GM12878 (cell line): ENCODE measurements at regions of chr17 and their contacts with region 1.

Region 1: DNA sequence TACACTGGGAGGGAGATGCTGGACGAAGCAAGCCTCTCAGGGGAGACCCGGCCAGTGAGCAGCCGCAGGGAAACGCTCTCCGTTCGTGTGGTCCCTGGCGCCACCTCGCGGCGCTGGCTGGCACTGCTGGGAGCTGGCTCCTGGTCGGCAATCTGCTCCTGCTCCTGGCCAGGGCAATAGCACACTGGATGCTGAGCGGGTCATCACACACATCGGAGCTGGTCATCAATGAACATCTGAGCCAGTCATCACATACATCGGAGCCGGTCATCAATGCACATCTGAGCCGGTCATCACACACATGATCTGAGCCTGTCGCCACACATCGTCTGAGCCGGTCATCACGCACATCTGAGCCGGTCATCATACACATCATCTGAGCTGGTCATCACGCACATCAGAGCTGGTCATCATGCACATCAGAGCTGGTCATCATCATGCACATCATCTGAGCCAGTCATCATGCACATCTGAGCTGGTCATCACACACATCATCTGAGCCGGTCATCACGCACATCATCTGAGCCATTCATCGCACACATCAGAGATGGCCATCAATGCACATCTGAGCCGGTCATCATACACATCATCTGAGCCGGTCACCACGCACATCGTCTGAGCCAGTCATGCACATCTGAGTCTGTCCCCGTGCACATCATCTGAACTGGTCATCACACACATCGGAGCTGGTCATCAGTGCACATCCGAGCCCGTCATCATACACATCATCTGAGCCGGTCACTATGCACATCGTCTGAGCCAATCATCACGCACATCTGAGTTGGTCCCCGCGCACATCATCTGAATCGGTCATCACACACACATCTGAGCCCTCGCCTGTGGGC is 217.3 kb downstream of the RBFOX3 start:
- DNase-seq: no peak
- ATAC-seq: peak; percentile 86
- H3K4me3 ChIP-seq: no peak overlapping the region
- H3K27ac ChIP-seq: no peak overlapping the region
- H3K4me1 ChIP-seq: no peaks in the 10 kb centered on the region
- H3K27me3 ChIP-seq: peaks cover 0 to 3% of the 10 kb centered on the region in 2 experiments; a peak in 3 of 4 replicates
- CTCF ChIP-seq: peak; percentile 92 to 98 (median 97)
- EP300 ChIP-seq: no peak
- POLR2A ChIP-seq: no peak
- RAD21 ChIP-seq: peak; percentile 87

Region 2: DNA sequence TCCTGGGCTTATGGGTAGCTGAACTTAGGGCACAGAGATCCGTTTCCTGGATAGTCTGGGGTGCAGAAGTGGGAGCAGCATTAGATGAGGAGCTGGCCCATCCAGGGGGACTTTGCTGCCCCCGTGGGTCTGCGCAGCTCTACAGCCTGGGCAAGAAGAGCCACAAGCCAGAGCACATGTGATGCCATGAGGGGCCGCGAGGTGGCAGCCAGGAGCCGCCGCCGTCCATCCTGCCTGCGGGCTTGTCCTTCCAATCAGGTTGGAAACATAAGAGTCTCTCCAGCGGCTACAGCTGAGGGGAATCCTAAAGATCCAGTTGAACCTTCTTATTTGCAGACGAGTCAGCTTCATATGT is 347.8 kb before region 1 on chr17:
- CTCF ChIA-PET with region 1: interaction called, 27 read pairs
- POLR2A ChIA-PET with region 1: no interaction called
- RAD21 ChIA-PET with region 1: interaction called, 7 read pairs
- SMC1A ChIA-PET with region 1: interaction called, 5 read pairs
- in situ Hi-C with region 1: no loop called
- intact Hi-C with region 1: no loop called
- DNase-seq: no peak
- ATAC-seq: peak; percentile 94
- H3K4me3 ChIP-seq: no peak overlapping the region
- H3K27ac ChIP-seq: no peak overlapping the region
- H3K4me1 ChIP-seq: no peaks in the 10 kb centered on the region
- H3K27me3 ChIP-seq: no peaks in the 10 kb centered on the region; a peak in 1 of 4 replicates
- CTCF ChIP-seq: peak; percentile 90 to 97 (median 92)
- EP300 ChIP-seq: no peak
- POLR2A ChIP-seq: no peak
- RAD21 ChIP-seq: peak; percentile 67

Region 3: GRCh38 chr17:79065105-79065670 is 328.4 kb before region 1 on chr17:
- CTCF ChIA-PET with region 1: interaction called, 11 read pairs
- POLR2A ChIA-PET with region 1: no interaction called
- RAD21 ChIA-PET with region 1: no interaction called
- SMC1A ChIA-PET with region 1: interaction called, 3 read pairs
- in situ Hi-C with region 1: no loop called
- intact Hi-C with region 1: no loop called
- DNase-seq: no peak
- ATAC-seq: peak; percentile 51; the same call in 1 of the 3 replicates
- H3K4me3 ChIP-seq: no peak overlapping the region
- H3K27ac ChIP-seq: no peak overlapping the region
- H3K4me1 ChIP-seq: no peaks in the 10 kb centered on the region
- H3K27me3 ChIP-seq: no peaks in the 10 kb centered on the region
- CTCF ChIP-seq: peak; percentile 46 to 51 (median 47); a peak in 5 of 6 replicates
- EP300 ChIP-seq: no peak
- POLR2A ChIP-seq: no peak
- RAD21 ChIP-seq: peak; percentile 38; the same call in 1 of the 2 replicates

Region 4: DNA sequence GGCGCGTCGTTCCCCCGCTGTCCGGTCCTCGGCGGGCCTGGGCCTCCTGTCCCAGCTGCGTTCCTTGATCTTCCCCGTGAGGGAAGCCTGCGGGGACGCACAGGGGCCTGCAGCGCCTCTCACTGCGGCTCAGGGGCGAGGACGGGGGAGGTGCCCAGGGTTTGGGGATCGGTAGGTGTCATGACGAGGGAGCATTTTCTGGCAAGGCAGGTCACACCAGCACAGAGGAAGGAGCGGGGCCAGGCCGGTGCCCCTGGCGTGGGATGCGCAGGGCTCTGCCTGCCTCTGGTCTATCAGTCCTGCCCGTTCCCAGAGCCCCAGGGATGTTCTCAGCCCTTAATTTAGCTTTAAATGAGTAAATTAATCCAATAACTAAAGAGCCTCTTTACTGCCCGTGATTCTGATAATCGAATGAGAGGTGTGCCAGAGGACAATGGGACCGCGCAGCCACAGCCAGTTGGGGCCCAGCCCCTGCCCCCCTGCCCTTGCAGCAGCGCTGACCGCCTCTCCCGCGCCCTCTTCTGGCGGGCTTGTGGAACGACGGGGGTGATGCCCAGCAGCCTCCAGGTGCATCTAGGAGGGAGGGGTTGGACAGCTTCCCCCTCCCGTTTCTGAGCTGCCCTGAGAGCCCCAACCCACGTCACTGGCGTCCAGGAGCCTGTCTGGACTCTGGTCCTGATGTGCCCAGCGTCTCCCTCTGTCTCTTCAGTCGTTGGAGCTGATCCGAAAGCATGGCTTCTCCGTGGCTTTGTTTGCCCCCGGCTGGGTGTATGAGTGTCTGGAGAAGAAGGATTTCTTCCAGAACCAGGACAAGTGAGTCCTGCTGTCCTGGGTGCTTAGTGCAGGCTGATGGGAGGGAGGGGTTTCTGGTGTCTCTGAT is 311.0 kb before region 1 on chr17:
- CTCF ChIA-PET with region 1: interaction called, 59 read pairs
- POLR2A ChIA-PET with region 1: no interaction called
- RAD21 ChIA-PET with region 1: interaction called, 41 read pairs
- SMC1A ChIA-PET with region 1: interaction called, 5 read pairs
- in situ Hi-C with region 1: loop called (anchors 5 kb)
- intact Hi-C with region 1: loop called (anchors 1 kb)
- DNase-seq: no peak
- ATAC-seq: peak; percentile 85
- H3K4me3 ChIP-seq: no peak overlapping the region
- H3K27ac ChIP-seq: no peak overlapping the region
- H3K4me1 ChIP-seq: no peaks in the 10 kb centered on the region
- H3K27me3 ChIP-seq: no peaks in the 10 kb centered on the region
- CTCF ChIP-seq: peak; percentile 68 to 89 (median 72)
- EP300 ChIP-seq: no peak
- POLR2A ChIP-seq: no peak
- RAD21 ChIP-seq: peak; percentile 57

Region 5: DNA sequence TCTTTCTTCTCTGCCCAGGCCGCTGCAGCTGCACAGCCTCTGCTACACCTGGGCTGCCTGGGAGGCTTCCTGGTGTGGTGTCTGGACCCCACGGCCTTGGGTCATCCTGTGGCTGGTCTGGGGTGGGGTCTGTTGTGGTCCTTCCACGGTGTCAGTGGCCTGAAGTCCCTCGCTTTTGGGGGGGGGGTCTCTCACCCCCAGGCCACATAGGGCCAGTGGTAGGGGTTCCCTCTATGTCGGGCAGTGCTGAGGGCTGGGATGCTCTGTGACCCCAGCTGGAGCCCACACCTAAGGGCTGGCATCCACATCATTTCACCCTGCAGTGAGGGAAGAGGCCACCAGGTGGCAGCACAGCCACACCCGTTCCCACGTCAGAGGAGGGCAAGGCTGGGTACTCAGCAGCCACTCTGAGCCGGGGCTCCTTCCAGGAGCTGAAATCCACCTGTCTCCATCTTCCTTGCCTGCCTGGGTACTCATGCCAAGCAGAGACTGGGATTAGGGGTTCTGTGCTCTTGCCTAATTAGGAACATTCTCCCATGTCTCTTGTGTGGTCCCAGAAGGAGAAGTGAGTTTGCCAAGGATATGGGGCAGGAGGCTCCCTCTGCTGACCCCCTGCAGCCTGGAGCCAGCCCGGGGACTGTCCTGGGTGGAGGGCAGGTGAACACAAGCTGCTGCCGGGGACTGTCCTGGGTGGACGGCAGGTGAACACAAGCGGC is 306.0 kb before region 1 on chr17:
- CTCF ChIA-PET with region 1: interaction called, 59 read pairs
- POLR2A ChIA-PET with region 1: no interaction called
- RAD21 ChIA-PET with region 1: interaction called, 41 read pairs
- SMC1A ChIA-PET with region 1: interaction called, 5 read pairs
- in situ Hi-C with region 1: loop called (anchors 5 kb)
- intact Hi-C with region 1: loop called (anchors 1 kb)
- DNase-seq: no peak
- ATAC-seq: peak; percentile 96
- H3K4me3 ChIP-seq: no peak overlapping the region
- H3K27ac ChIP-seq: no peak overlapping the region
- H3K4me1 ChIP-seq: no peaks in the 10 kb centered on the region
- H3K27me3 ChIP-seq: no peaks in the 10 kb centered on the region
- CTCF ChIP-seq: peak; percentile 85 to 92 (median 88)
- EP300 ChIP-seq: no peak
- POLR2A ChIP-seq: peak; percentile 39; the same call in 1 of the 2 replicates
- RAD21 ChIP-seq: peak; percentile 67

Region 6: DNA sequence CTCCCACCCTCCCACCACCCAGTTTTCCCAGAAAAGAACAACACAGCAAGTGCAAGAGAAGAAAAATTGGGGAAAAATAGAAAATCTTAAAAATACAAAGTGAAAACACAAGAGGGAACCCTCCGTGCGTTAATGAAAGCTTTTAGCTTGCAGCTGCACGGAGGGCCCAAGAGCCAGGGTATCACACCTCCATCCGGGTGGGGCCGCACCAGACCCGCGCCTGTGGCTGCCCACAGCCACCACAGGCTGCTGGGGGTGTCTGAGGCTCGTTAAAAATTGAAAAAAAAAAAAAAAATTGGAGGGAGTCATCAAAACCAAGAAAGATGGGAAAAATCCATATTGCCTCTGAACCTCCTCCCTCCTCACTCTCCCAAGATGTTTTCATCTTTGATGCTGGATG is 300.3 kb before region 1 on chr17:
- CTCF ChIA-PET with region 1: interaction called, 59 read pairs
- POLR2A ChIA-PET with region 1: no interaction called
- RAD21 ChIA-PET with region 1: interaction called, 41 read pairs
- SMC1A ChIA-PET with region 1: interaction called, 3 read pairs
- in situ Hi-C with region 1: no loop called
- intact Hi-C with region 1: no loop called
- DNase-seq: no peak
- ATAC-seq: no peak
- H3K4me3 ChIP-seq: no peak overlapping the region
- H3K27ac ChIP-seq: no peak overlapping the region
- H3K4me1 ChIP-seq: no peaks in the 10 kb centered on the region
- H3K27me3 ChIP-seq: no peaks in the 10 kb centered on the region; a peak in 3 of 4 replicates
- CTCF ChIP-seq: no peak
- EP300 ChIP-seq: no peak
- POLR2A ChIP-seq: no peak
- RAD21 ChIP-seq: no peak

Region 7: GRCh38 chr17:79188048-79188447 is 205.5 kb before region 1 on chr17:
- CTCF ChIA-PET with region 1: interaction called, 37 read pairs
- POLR2A ChIA-PET with region 1: no interaction called
- RAD21 ChIA-PET with region 1: interaction called, 8 read pairs
- SMC1A ChIA-PET with region 1: interaction called, 14 read pairs
- in situ Hi-C with region 1: loop called (anchors 5 kb)
- intact Hi-C with region 1: loop called (anchors 2 kb)
- DNase-seq: no peak
- ATAC-seq: peak; percentile 68
- H3K4me3 ChIP-seq: no peak overlapping the region
- H3K27ac ChIP-seq: no peak overlapping the region
- H3K4me1 ChIP-seq: no peaks in the 10 kb centered on the region
- H3K27me3 ChIP-seq: peaks cover 2 to 6% of the 10 kb centered on the region in 2 experiments; a peak in 3 of 4 replicates
- CTCF ChIP-seq: peak; percentile 48 to 61 (median 59); a peak in 5 of 6 replicates
- EP300 ChIP-seq: no peak
- POLR2A ChIP-seq: no peak
- RAD21 ChIP-seq: peak; percentile 65

Region 8: GRCh38 chr17:79372470-79373238 is 20.9 kb before region 1 on chr17:
- CTCF ChIA-PET with region 1: no interaction called
- POLR2A ChIA-PET with region 1: no interaction called
- RAD21 ChIA-PET with region 1: no interaction called
- SMC1A ChIA-PET with region 1: no interaction called
- in situ Hi-C with region 1: no loop called
- intact Hi-C with region 1: no loop called
- DNase-seq: no peak
- ATAC-seq: no peak
- H3K4me3 ChIP-seq: no peak overlapping the region
- H3K27ac ChIP-seq: no peak overlapping the region
- H3K4me1 ChIP-seq: no peaks in the 10 kb centered on the region
- H3K27me3 ChIP-seq: peaks cover 0 to 2% of the 10 kb centered on the region in 2 experiments; a peak in 1 of 4 replicates
- CTCF ChIP-seq: no peak
- EP300 ChIP-seq: no peak
- POLR2A ChIP-seq: no peak
- RAD21 ChIP-seq: no peak

Region 9: DNA sequence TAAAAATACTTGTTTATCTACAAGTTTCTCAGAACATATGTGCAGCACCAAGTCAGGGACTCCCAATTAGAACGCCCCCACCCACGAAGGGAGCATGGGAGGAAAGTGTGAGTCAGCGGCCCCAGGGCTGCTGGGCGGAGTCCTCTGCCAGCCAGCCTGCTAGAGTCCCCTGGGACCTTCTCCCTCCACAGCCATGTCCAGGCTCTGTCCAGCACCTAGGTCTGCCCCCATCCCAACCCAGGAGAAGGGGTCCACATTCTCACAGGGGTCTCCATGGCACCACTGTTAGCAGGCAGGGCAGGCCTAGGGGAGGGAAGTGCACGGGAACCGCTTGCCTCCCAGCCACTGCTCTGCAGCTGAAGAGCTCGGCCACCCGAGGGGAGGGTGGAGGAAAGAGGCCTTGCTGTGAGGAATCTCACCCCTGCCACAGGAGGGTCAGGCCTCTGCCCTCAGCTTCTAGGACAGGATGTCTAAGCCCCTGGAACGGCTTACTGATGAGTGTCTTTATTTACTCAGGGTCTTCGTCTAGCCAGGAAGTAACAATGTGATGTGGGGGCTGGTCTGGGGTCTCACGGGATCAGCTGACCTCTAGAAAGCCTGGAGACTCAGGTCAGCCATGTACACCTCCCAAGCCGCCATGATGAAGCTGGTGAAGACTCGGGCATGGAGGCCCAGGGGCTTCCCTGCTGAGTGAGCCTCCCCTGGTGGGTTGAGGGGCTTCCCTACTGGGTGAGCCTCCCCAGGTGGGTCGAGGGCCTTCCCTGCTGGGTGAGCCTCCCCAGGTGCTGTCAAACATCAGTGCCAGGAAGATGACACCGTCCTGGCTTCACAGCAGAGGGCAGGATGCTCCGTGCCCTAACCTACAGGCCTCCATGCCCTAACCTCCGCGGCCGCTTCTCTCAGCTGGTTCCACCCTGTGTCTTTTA is 27.0 kb after region 1 on chr17:
- CTCF ChIA-PET with region 1: no interaction called
- POLR2A ChIA-PET with region 1: no interaction called
- RAD21 ChIA-PET with region 1: no interaction called
- SMC1A ChIA-PET with region 1: no interaction called
- in situ Hi-C with region 1: no loop called
- intact Hi-C with region 1: no loop called
- DNase-seq: no peak
- ATAC-seq: no peak
- H3K4me3 ChIP-seq: no peak overlapping the region
- H3K27ac ChIP-seq: no peak overlapping the region
- H3K4me1 ChIP-seq: no peaks in the 10 kb centered on the region
- H3K27me3 ChIP-seq: peaks cover 0 to 3% of the 10 kb centered on the region in 2 experiments; a peak in 1 of 4 replicates
- CTCF ChIP-seq: no peak
- EP300 ChIP-seq: no peak
- POLR2A ChIP-seq: no peak
- RAD21 ChIP-seq: no peak

Region 10: GRCh38 chr17:79482752-79483521 is 89.4 kb after region 1 on chr17:
- CTCF ChIA-PET with region 1: no interaction called
- POLR2A ChIA-PET with region 1: no interaction called
- RAD21 ChIA-PET with region 1: no interaction called
- SMC1A ChIA-PET with region 1: no interaction called
- in situ Hi-C with region 1: no loop called
- intact Hi-C with region 1: no loop called
- DNase-seq: no peak
- ATAC-seq: no peak
- H3K4me3 ChIP-seq: no peak overlapping the region
- H3K27ac ChIP-seq: no peak overlapping the region
- H3K4me1 ChIP-seq: no peaks in the 10 kb centered on the region
- H3K27me3 ChIP-seq: no peaks in the 10 kb centered on the region; a peak in 2 of 4 replicates
- CTCF ChIP-seq: no peak
- EP300 ChIP-seq: no peak
- POLR2A ChIP-seq: no peak
- RAD21 ChIP-seq: no peak